ENCODE measurements at regions of chr16 and their contacts with region 1.

Region 1: GRCh38 chr16:75471723-75472633 is 7.5 kb upstream of the TMEM170A start:
- DNase-seq: peak; percentile 41
- ATAC-seq: peak; percentile 87
- H3K4me3 Mint-ChIP-seq: no peak overlapping the region
- H3K27ac Mint-ChIP-seq: no peak overlapping the region
- H3K4me1 Mint-ChIP-seq: peaks cover 1% of the 10 kb centered on the region
- H3K27me3 Mint-ChIP-seq: no peaks in the 10 kb centered on the region
- CTCF ChIP-seq: peak; percentile 85

Region 2: DNA sequence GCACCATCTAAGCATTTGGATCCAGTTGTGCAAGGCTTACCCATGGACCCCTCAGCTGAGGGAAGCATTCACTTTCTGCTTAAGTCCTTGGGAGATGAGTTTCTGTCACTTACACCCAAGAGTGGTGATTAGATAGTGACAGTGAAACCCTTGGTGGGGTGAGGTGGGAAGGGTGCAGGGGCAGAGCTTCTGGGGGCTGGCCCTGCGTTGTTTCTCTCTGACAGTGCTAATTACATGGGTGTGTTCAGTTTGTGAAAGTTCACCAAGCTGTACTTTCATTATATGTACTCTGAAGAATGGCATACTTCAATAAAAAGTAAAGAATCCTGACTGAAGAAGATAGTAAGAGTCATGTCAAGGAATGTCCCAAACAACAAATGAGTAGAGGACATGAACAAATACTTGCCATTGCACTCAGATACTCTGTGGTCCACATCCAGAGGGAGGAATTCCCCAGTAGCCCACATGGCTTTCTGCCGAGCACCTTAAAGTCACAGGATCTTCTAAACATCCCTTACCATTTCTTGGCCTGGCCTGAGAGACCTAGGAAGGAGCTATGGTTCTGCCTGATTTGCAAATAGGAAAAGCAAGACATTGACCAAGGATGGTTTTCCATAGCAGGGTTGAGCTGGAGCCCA is 14.8 kb after region 1 on chr16:
- CTCF ChIA-PET with region 1: interaction called, 10 read pairs
- POLR2A ChIA-PET with region 1: interaction called, 5 read pairs
- intact Hi-C with region 1: no loop called
- DNase-seq: no peak
- ATAC-seq: peak; percentile 61
- H3K4me3 Mint-ChIP-seq: no peak overlapping the region
- H3K27ac Mint-ChIP-seq: no peak overlapping the region
- H3K4me1 Mint-ChIP-seq: no peaks in the 10 kb centered on the region
- H3K27me3 Mint-ChIP-seq: peaks cover 11% of the 10 kb centered on the region
- CTCF ChIP-seq: no peak

Region 3: GRCh38 chr16:75550211-75550662 is 78.3 kb after region 1 on chr16:
- CTCF ChIA-PET with region 1: interaction called, 11 read pairs
- POLR2A ChIA-PET with region 1: no interaction called
- intact Hi-C with region 1: no loop called
- DNase-seq: peak; percentile 47
- ATAC-seq: peak; percentile 72
- H3K4me3 Mint-ChIP-seq: no peak overlapping the region
- H3K27ac Mint-ChIP-seq: no peak overlapping the region
- H3K4me1 Mint-ChIP-seq: no peaks in the 10 kb centered on the region
- H3K27me3 Mint-ChIP-seq: peaks cover 6% of the 10 kb centered on the region
- CTCF ChIP-seq: peak; percentile 29

Region 4: DNA sequence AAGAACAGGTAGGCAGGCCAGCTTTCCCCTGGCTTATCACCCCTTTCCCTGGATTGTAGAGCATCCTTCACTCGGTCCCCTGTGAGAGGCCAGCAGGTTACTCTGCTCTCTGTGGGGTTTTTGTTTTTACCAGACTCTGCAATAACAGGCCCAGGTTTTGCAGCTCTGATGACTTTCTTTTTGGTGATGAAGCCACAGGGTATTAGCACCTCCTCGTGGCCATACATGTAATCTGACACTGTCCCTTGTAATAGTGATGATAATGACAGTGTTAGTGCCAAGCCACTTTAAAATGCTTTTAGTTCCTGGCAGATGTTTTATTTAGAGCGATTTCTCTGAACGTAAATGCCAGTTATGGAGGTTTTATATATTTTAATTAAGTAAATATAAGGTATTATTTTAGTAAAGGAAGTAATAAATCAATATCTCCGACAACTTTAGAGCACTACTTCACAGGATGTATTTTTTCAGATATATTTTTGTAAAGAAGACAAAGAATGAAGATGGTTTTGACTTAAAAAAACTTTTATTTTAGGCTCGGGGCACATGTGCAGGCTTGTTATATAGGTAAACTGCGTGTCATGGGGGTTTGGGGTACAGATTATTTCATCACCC is 292.3 kb after region 1 on chr16:
- CTCF ChIA-PET with region 1: interaction called, 18 read pairs
- POLR2A ChIA-PET with region 1: no interaction called
- intact Hi-C with region 1: loop called (anchors 5 kb)
- DNase-seq: peak; percentile 76
- ATAC-seq: peak; percentile 94
- H3K4me3 Mint-ChIP-seq: no peak overlapping the region
- H3K27ac Mint-ChIP-seq: no peak overlapping the region
- H3K4me1 Mint-ChIP-seq: peaks cover 11% of the 10 kb centered on the region
- H3K27me3 Mint-ChIP-seq: no peaks in the 10 kb centered on the region
- CTCF ChIP-seq: peak; percentile 84

Measured in activated CD8-positive, alpha-beta T cell treated with anti-CD3 and anti-CD28 coated beads for 36 hours (primary cell).